Activated CD4-positive, alpha-beta T cell treated with anti-CD3 and anti-CD28 coated beads for 36 hours (primary cell): ENCODE measurements at regions of chr1 and their contacts with region 1.

Region 1: GRCh38 chr1:66436378-66437145 is 97.4 kb upstream of the SGIP1 start:
- DNase-seq: peak; percentile 77
- ATAC-seq: peak; percentile 97
- H3K4me3 Mint-ChIP-seq: no peak overlapping the region
- H3K27ac Mint-ChIP-seq: peak overlapping the region; percentile 58
- H3K4me1 Mint-ChIP-seq: peaks cover 39% of the 10 kb centered on the region
- H3K27me3 Mint-ChIP-seq: no peaks in the 10 kb centered on the region

Region 2: GRCh38 chr1:66258404-66259105 is 178.0 kb before region 1 on chr1:
- CTCF ChIA-PET with region 1: interaction called, 359 read pairs
- POLR2A ChIA-PET with region 1: no interaction called
- intact Hi-C with region 1: loop called in 1 of 2 experiments (anchors 1 kb)
- DNase-seq: no peak
- ATAC-seq: peak; percentile 91
- H3K4me3 Mint-ChIP-seq: no peak overlapping the region
- H3K27ac Mint-ChIP-seq: peak overlapping the region; percentile 68
- H3K4me1 Mint-ChIP-seq: peaks cover 90% of the 10 kb centered on the region
- H3K27me3 Mint-ChIP-seq: no peaks in the 10 kb centered on the region

Region 3: DNA sequence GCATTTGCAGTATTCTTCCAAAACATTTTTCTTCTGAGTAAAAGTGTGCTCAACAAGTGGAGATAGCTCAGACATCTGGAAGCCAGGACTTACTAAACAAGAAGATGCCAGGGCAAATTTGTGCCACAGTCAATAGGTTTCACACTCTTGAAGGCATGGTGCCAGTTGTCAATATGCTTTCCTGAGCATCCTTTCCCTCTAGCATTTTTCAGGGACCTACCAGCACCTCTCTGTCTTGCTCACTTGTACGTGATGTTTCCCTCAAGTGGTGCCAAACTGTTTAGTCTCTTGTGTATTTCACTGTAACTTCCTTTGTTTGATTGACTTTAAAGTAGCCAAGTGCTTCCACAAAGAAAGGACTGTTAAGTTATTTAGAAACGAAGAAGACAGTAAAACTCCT is 96.6 kb before region 1 on chr1:
- CTCF ChIA-PET with region 1: interaction called, 21 read pairs
- POLR2A ChIA-PET with region 1: no interaction called
- intact Hi-C with region 1: no loop called
- DNase-seq: no peak
- ATAC-seq: no peak
- H3K4me3 Mint-ChIP-seq: peak overlapping the region; percentile 69
- H3K27ac Mint-ChIP-seq: peak overlapping the region; percentile 85
- H3K4me1 Mint-ChIP-seq: peaks cover 68% of the 10 kb centered on the region
- H3K27me3 Mint-ChIP-seq: no peaks in the 10 kb centered on the region

Region 4: GRCh38 chr1:66360285-66360724 is 76.3 kb before region 1 on chr1:
- CTCF ChIA-PET with region 1: interaction called, 21 read pairs
- POLR2A ChIA-PET with region 1: no interaction called
- intact Hi-C with region 1: no loop called
- DNase-seq: no peak
- ATAC-seq: peak; percentile 51
- H3K4me3 Mint-ChIP-seq: no peak overlapping the region
- H3K27ac Mint-ChIP-seq: no peak overlapping the region
- H3K4me1 Mint-ChIP-seq: peaks cover 76% of the 10 kb centered on the region
- H3K27me3 Mint-ChIP-seq: no peaks in the 10 kb centered on the region

Region 5: GRCh38 chr1:66396212-66396890 is 40.2 kb before region 1 on chr1:
- CTCF ChIA-PET with region 1: interaction called, 8 read pairs
- POLR2A ChIA-PET with region 1: no interaction called
- intact Hi-C with region 1: loop called (anchors 1 to 2 kb)
- DNase-seq: peak; percentile 39
- ATAC-seq: peak; percentile 56
- H3K4me3 Mint-ChIP-seq: no peak overlapping the region
- H3K27ac Mint-ChIP-seq: no peak overlapping the region
- H3K4me1 Mint-ChIP-seq: peaks cover 39% of the 10 kb centered on the region
- H3K27me3 Mint-ChIP-seq: peaks cover 2% of the 10 kb centered on the region